Aorta (tissue), 5 donors: ENCODE measurements at regions of chr6 and their contacts with region 1.

Region 1: GRCh38 chr6:32940656-32941213 is at the start of gene HLA-DMB:
- DNase-seq: no peak
- ATAC-seq: peak; percentile 94
- H3K4me3 ChIP-seq: peak within 1 kb of the TSS in 1 of 2 donors; percentile 0
- H3K27ac ChIP-seq: no peak within 1 kb of the TSS
- H3K4me1 ChIP-seq: no peaks in the 10 kb centered on the region
- H3K27me3 ChIP-seq: no peaks in the 10 kb centered on the region
- total RNA-seq, gene HLA-DMB: 20.1 to 73.1 TPM

Region 2: DNA sequence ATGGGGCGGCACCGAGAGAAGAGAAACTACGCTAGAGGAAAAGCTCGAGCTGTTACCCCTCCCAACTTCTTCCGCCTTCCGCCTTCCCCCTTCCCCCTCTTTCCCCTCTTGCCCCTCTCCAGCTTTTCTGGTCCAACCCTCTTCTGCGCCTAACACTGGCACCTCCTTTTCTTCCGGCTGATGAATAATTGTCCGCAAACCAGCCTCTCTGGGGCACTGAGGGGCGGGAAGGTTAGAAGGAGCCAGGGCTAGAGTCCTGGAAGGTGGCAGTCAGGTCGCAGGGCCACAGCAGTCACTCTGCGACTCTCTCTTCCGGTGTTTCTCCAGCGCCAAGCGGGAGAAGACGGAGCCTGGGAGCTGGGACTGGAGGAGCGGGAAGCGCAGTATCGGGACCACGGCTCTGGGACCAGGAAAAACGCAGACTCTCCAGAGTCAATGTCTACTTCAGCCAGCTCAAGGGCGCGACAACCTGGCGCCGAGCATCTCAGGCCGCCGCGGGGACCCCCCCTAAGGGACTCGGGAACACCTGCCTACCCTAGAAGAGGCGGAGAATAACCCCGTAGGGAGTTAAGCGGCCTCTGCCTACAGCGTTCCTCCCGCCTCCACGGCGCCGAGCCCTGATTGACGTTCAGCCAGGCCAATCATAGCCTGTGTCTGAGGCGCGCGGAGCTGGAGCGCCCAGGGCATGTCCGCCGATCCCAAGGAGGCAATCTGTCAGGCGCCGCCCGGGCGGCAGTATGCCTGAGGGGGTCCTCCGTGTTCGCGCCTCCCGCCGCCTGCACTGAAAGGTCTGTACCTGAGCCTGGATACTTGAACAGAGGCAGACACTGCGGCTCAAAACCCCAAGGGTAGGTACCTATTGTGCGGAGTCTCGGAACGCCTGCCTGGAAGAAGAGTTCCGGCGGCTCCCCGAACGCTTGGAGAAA is 46.4 kb before region 1 on chr6:
- intact Hi-C with region 1: loop called in 1 of 2 experiments (anchors 5 kb)
- DNase-seq: peak; percentile 95 to 97
- ATAC-seq: peak; percentile 100
- H3K4me3 ChIP-seq: peak overlapping the region; percentile 52 to 78
- H3K27ac ChIP-seq: peak overlapping the region in 1 of 2 donors; percentile 49
- H3K4me1 ChIP-seq: no peaks in the 10 kb centered on the region
- H3K27me3 ChIP-seq: no peaks in the 10 kb centered on the region

Region 3: DNA sequence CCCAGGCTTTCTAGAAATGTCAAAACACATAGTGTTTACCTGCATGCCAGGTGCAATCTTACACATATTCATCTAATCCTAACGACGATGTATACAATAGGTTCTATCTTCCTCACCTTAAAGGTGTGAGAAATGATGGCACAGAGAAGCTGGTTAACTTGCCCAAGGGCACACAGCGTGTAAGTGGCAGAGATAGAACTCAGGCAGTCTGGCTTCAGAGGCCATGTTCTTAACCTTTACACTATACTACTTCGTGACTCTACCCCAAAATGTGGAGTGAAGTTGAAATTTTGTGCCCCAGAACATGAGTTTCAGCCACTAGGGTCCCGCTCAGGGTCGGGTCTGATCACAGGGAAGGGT is 330.3 kb after region 1 on chr6:
- intact Hi-C with region 1: no loop called
- DNase-seq: no peak
- ATAC-seq: no peak
- H3K4me3 ChIP-seq: peak overlapping the region; percentile 63 to 84
- H3K27ac ChIP-seq: peak overlapping the region; percentile 56 to 67
- H3K4me1 ChIP-seq: no peaks in the 10 kb centered on the region
- H3K27me3 ChIP-seq: no peaks in the 10 kb centered on the region